ENCODE measurements at regions of chr16 and their contacts with region 1.

Region 1: DNA sequence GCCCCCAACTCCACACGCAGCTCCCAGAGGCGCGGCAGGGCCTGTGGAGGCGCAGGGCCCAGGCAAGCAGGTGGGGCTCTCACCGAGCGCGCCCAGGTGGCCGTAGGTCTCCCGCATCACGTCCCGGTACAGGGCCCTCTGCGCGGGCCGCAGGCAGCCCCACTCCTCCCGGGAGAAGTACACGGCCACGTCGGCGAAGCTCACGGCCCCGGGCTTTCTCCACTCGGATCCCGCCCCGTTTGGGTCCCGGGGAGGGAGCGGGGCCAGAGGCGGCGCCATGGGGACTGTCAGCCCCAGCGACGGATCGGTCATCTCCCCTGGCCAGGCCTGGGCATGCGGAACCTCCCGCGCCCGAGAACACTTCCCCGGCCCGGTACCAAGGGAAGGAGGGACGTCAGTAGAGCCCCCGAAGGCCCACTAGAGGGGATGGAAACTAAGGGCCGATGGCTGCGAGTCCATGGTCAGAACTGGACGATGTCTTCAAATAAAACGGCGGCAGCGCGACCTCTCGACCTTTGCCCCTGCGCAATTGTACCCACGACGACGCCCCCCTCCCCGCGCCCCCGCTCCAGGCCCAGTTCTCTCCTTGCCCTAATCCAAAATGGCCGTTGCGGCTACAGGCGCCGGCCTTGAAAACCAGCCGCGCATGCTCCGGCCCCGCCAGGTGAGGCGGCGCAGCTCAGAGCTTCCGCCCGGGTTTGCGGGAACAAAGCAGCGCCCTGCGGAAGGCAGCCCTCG is at the start of gene ZNF747:
- DNase-seq: peak; percentile 61 to 95
- H3K4me3 ChIP-seq: peak within 1 kb of the TSS; percentile 69 to 93
- H3K27ac ChIP-seq: peak within 1 kb of the TSS; percentile 86 to 96
- H3K4me1 ChIP-seq: peaks cover 11 to 12% of the 10 kb centered on the region in 2 donors
- H3K27me3 ChIP-seq: no peaks in the 10 kb centered on the region
- CTCF ChIP-seq: peak in 1 of 3 experiments; percentile 8
- total RNA-seq, gene ZNF747: 19.6 TPM

Region 2: DNA sequence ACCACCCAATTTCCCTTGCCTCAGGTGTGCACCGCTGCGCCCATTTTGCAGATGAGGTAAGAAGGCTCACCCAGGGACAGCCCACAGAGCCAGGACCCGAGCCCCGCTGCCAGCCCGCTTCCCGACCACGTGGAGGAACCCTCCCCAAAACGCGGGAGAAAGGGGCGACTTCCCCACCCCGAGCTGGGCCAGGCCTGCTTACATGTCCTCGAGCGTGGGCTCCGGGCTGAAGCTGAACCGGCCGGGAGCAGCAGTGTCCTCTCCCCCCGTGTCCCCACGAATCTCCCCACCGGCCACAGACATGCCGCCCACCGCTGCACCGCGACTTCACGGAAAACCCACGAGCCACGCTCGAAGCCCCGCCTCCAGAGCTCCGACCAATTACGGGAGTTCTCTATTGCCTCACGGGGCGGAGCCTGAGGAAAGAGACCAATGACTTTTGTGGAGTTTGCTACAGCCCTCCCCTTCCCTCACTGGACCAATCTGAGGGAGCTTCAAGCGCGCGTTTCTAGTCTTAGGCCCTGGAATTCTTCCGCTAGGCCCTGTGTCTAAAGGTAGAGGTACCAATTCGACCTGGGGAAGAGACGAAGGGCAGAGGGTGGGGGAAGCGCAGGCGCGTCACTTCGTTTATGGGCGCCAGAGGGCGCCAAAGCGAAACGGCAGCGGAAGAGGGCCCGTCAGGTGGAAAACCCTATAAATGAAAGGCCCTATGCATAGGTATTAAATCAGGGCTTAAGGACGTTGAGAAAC is 104.7 kb before region 1 on chr16 and contains the start of gene DCTPP1:
- intact Hi-C with region 1: loop called (anchors 2 kb)
- DNase-seq: peak; percentile 93 to 97
- H3K4me3 ChIP-seq: peak within 1 kb of the TSS; percentile 64 to 81
- H3K27ac ChIP-seq: peak within 1 kb of the TSS; percentile 67 to 80
- H3K4me1 ChIP-seq: peaks cover 4 to 11% of the 10 kb centered on the region in 2 donors
- H3K27me3 ChIP-seq: no peaks in the 10 kb centered on the region
- CTCF ChIP-seq: peak; percentile 64 to 75 (median 70)
- total RNA-seq, gene DCTPP1: 7.2 TPM

Region 3: GRCh38 chr16:30445408-30446202 is 88.9 kb before region 1 on chr16 and contains the start of gene SEPHS2:
- intact Hi-C with region 1: loop called (anchors 2 kb)
- DNase-seq: peak; percentile 99 to 100
- H3K4me3 ChIP-seq: peak within 1 kb of the TSS; percentile 79 to 97
- H3K27ac ChIP-seq: peak within 1 kb of the TSS; percentile 92 to 97
- H3K4me1 ChIP-seq: peaks cover 5 to 16% of the 10 kb centered on the region in 2 donors
- H3K27me3 ChIP-seq: no peaks in the 10 kb centered on the region
- CTCF ChIP-seq: peak; percentile 41 to 59 (median 42)
- total RNA-seq, gene SEPHS2: 22.8 TPM

Region 4: DNA sequence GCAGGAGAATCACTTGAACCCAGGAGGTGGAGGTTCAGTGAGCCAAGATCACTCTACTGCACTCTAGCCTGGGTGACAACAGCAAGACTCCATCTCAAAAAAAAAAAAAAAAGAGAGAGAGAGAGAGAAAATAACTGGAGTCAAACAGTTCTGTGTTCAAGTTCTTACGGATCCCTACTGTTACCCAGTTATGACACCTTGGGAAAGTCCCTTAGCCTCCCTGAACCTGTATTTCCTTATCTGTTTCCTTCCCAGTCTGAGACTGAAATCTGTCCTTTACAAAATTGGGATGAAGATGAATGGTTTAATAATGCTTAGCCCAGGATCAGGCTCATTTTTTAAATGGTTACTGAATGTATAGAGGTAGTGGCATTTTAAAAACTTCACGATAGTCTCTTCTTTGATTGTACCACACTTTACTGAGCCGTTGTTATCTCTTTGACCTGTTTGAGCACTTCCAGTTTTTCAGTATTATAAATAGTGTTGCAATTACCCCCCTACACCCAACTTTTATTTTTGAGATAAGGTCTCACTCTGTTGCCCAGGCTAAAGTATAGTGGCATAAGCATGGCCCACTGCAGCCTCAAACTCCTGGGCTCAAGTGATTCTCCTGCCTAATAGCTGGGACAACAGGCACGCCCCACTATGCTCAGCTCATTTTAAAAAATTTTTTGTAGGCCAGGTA is 25.3 kb before region 1 on chr16:
- intact Hi-C with region 1: no loop called
- DNase-seq: no peak
- H3K4me3 ChIP-seq: no peak overlapping the region
- H3K27ac ChIP-seq: no peak overlapping the region
- H3K4me1 ChIP-seq: no peaks in the 10 kb centered on the region
- H3K27me3 ChIP-seq: no peaks in the 10 kb centered on the region
- CTCF ChIP-seq: no peak

Region 5: GRCh38 chr16:30557957-30558788 is 23.6 kb after region 1 on chr16 and contains the start of gene ZNF764:
- intact Hi-C with region 1: loop called (anchors 1 kb)
- DNase-seq: peak; percentile 96 to 99
- H3K4me3 ChIP-seq: peak within 1 kb of the TSS; percentile 91
- H3K27ac ChIP-seq: peak within 1 kb of the TSS; percentile 92 to 94
- H3K4me1 ChIP-seq: peaks cover 9 to 10% of the 10 kb centered on the region in 2 donors
- H3K27me3 ChIP-seq: no peaks in the 10 kb centered on the region
- CTCF ChIP-seq: peak in 1 of 3 experiments; percentile 1
- total RNA-seq, gene ZNF764: 10.9 TPM

Region 6: GRCh38 chr16:30571695-30572600 is 37.4 kb after region 1 on chr16 and contains the start of gene ZNF688:
- intact Hi-C with region 1: loop called (anchors 2 kb)
- DNase-seq: peak; percentile 97 to 99
- H3K4me3 ChIP-seq: peak within 1 kb of the TSS; percentile 83 to 92
- H3K27ac ChIP-seq: peak within 1 kb of the TSS; percentile 96 to 99
- H3K4me1 ChIP-seq: peaks cover 13 to 21% of the 10 kb centered on the region in 2 donors
- H3K27me3 ChIP-seq: no peaks in the 10 kb centered on the region
- CTCF ChIP-seq: peak in 1 of 3 experiments; percentile 17
- total RNA-seq, gene ZNF688: 11.3 TPM

Region 7: GRCh38 chr16:30592871-30593270 is 58.3 kb after region 1 on chr16:
- intact Hi-C with region 1: no loop called
- DNase-seq: no peak
- H3K4me3 ChIP-seq: no peak overlapping the region
- H3K27ac ChIP-seq: no peak overlapping the region
- H3K4me1 ChIP-seq: no peaks in the 10 kb centered on the region
- H3K27me3 ChIP-seq: no peaks in the 10 kb centered on the region
- CTCF ChIP-seq: no peak

Region 8: DNA sequence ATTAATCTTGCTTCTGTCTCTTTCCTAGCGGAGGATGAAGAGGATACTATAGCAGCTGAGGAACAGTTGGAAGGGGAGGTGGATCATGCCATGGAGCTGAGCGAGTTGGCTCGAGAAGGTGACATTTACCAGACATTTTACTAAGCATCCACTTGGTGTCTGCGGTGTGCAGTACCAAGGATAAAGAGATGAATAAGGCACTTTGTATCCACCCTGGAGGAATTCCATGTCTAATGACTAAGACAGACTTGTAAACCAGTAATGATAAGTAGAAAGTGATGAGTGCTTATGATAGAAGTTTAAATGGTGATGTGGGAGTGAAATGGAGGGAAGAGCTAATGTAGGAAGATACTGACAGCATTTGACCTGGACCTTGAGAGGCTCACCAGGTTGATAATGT is 176.4 kb after region 1 on chr16:
- intact Hi-C with region 1: no loop called
- DNase-seq: no peak
- H3K4me3 ChIP-seq: no peak overlapping the region
- H3K27ac ChIP-seq: no peak overlapping the region
- H3K4me1 ChIP-seq: no peaks in the 10 kb centered on the region
- H3K27me3 ChIP-seq: no peaks in the 10 kb centered on the region
- CTCF ChIP-seq: no peak

Region 9: GRCh38 chr16:31365131-31365865 is 830.8 kb after region 1 on chr16:
- intact Hi-C with region 1: no loop called
- DNase-seq: no peak
- H3K4me3 ChIP-seq: no peak overlapping the region
- H3K27ac ChIP-seq: no peak overlapping the region
- H3K4me1 ChIP-seq: no peaks in the 10 kb centered on the region
- H3K27me3 ChIP-seq: no peaks in the 10 kb centered on the region
- CTCF ChIP-seq: no peak